Mammary epithelial cell (primary cell): ENCODE measurements at regions of chr11 and their contacts with region 1.

Region 1: GRCh38 chr11:132114185-132114584 is 743.8 kb downstream of the NTM start:
- DNase-seq: no peak
- H3K4me3 ChIP-seq: no peak overlapping the region
- H3K27ac ChIP-seq: no peak overlapping the region
- H3K4me1 ChIP-seq: peaks cover 14% of the 10 kb centered on the region
- H3K27me3 ChIP-seq: no peaks in the 10 kb centered on the region
- CTCF ChIP-seq: peak; percentile 34 to 68

Region 2: DNA sequence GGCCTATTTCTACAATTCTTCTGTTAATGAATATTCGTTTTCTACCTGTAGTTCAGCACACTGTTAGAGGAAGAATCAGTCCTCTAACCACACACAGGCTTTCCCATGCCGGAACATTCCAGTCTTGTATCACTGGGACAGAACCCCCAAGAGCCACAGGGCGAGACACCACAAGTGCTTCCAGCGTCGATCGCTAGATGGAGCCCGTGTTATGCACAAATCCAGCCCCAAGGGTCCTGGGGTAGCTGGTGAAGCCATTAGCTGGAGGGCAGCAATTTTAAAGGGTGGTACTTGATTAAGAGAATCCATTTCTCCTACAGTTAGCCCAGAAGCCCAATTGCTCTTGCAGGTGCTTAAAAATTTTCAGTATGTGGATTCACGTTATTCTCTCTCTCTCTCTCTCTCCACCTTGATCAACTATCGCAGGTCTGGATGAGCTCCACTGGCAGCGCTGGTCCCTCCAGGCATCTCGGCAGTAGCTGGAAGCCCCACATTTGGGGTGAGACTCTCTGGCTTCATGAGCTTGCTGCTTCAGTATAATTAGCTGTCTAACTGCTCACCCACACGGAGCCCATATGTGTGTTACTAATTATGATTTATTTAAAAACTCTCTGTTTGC is 1049.7 kb before region 1 on chr11:
- CTCF ChIA-PET with region 1: no interaction called
- dilution Hi-C with region 1: no loop called
- in situ Hi-C with region 1: no loop called
- intact Hi-C with region 1: no loop called
- DNase-seq: peak; percentile 43
- H3K4me3 ChIP-seq: no peak overlapping the region
- H3K27ac ChIP-seq: no peak overlapping the region
- H3K4me1 ChIP-seq: no peaks in the 10 kb centered on the region
- H3K27me3 ChIP-seq: no peaks in the 10 kb centered on the region
- CTCF ChIP-seq: peak; percentile 97

Region 3: DNA sequence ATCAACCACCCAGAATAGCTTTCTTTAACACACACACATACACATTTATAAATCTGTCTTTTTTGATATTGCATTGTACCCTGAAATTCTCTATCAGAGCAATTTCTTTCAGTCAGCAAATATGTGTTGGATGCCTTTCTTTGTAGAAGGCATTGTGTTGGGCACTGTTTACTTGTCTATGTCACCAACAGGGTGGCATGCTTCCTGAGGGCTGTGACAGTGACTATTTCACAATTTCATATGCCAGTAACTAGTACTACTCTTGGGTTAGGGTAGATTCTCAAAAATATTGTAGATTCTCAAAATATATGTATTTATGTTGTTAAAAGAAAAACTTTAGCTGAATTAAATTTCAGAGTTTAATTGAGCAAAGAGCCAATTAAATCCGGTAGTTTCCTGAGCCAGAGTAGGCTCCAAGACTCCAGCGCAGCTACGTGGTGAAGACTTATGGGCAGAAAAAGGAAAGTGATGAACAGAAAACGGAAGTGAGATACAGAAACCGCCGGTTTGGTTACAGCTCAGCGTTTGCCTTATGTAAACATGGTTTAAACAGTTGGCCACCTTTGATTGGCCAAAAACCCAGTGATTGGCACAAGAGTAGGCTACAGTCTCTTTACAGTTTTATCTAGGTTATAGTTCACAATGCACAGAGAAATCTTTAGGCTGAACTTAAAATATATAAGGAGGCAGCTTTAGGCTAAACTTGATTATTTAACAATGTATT is 20.5 kb before region 1 on chr11:
- CTCF ChIA-PET with region 1: no interaction called
- dilution Hi-C with region 1: no loop called
- in situ Hi-C with region 1: no loop called
- intact Hi-C with region 1: loop called (anchors 1 kb)
- DNase-seq: no peak
- H3K4me3 ChIP-seq: no peak overlapping the region
- H3K27ac ChIP-seq: no peak overlapping the region
- H3K4me1 ChIP-seq: peaks cover 5% of the 10 kb centered on the region
- H3K27me3 ChIP-seq: no peaks in the 10 kb centered on the region
- CTCF ChIP-seq: no peak